GM10248 (cell line): ENCODE measurements at regions of chr4 and their contacts with region 1.

Region 1: GRCh38 chr4:121219227-121219626 is 55.1 kb upstream of the TNIP3 start:
- DNase-seq: no peak
- CTCF ChIP-seq: no peak

Region 2: GRCh38 chr4:121209171-121209570 is 10.1 kb before region 1 on chr4:
- CTCF ChIA-PET with region 1: interaction called, 29 read pairs
- POLR2A ChIA-PET with region 1: no interaction called
- DNase-seq: no peak
- CTCF ChIP-seq: no peak